ENCODE measurements at regions of chr4 and their contacts with region 1.

Region 1: DNA sequence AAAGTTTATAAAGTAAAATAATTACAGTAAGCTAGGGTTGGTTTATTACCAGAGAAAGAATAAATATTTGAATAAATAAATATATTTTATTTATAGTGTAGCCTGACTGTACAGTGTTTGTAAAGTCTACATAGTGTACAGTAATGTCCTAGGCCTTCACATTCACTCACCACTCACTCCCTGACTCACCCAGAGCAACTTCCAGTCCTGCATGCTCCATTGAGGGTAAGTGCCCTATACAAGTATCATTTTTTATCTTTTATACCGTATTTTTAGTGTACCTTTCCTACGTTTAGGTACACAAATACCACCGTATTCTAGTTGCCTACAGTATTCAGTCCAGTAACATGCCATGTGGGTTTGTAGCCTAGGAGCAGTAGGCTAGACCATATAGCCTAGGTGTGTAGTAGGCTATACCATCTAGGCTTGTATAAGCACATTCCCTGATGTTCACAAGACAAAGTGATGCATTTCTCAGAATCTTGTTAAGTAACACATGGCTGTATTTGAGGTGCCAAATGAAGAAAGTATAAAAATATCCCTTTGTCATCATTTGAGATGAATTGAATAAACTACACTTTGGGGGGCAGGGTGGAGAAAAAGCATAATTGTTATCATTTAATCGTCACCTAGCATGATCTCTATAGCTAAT is 14.7 kb upstream of the KLHL8 start:
- DNase-seq: no peak
- ATAC-seq: no peak
- H3K4me3 Mint-ChIP-seq: peak overlapping the region; percentile 80
- H3K27ac Mint-ChIP-seq: no peak overlapping the region
- H3K4me1 Mint-ChIP-seq: peaks cover 3% of the 10 kb centered on the region
- H3K27me3 Mint-ChIP-seq: peaks cover 1% of the 10 kb centered on the region
- CTCF ChIP-seq: no peak

Region 2: DNA sequence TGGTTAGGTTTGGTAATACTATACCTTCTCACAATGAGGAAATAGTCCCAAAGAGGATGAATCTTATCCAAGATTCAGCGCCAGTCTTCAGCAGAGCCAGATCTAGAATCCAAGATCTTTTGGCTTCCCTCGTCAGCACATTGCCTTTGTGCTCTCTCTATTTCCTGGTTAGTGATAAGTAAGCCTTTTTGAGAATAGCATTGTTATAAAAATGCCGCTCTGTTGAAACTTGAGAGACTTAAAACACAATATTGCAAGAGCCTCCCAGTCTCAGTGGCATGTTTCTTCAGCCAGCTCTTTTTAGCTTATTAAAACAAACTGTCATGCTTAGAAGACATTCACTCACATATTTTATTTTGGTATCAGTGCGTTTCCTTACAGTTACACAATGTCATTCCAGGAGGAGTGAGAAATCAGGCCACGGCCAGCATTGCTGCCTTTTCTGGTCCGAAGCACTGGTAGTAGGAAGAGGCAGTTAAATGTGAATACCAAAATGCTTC is 156.1 kb before region 1 on chr4:
- CTCF ChIA-PET with region 1: no interaction called
- POLR2A ChIA-PET with region 1: no interaction called
- intact Hi-C with region 1: no loop called
- DNase-seq: no peak
- ATAC-seq: no peak
- H3K4me3 Mint-ChIP-seq: no peak overlapping the region
- H3K27ac Mint-ChIP-seq: no peak overlapping the region
- H3K4me1 Mint-ChIP-seq: peaks cover 35% of the 10 kb centered on the region
- H3K27me3 Mint-ChIP-seq: no peaks in the 10 kb centered on the region
- CTCF ChIP-seq: no peak

Region 3: DNA sequence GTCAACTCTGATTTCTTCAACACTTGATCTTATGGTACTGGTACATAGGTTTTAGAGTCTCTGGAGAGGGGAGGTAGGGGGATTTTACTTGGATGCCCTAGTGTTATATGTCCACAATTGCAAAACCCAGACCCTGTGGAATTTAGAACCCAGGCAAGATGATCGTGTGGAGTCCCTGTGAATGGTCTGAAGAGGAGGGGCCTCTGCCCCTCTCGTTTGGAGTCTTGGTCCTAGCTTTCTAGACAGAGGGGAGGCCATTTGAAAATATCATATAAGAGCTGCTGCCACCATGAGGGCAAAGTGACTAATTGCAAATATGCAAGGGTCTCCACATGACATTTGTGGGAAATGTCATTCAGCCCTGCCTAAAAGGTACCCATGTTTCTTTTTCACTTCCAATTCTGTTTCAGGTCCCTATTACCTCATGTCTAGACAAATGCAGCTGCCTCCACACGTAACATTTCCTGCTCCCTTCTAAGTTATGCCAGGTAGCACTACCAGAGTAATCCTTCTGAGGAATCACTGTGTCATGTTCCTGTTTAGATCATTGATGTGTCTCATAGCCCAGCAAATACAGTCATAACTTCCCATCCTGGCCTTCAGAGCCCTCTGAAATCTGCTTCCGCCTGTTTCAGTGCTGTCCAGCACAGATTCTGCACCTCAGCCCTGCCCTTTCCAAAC is 141.6 kb before region 1 on chr4:
- CTCF ChIA-PET with region 1: no interaction called
- POLR2A ChIA-PET with region 1: no interaction called
- intact Hi-C with region 1: loop called (anchors 5 kb)
- DNase-seq: no peak
- ATAC-seq: peak; percentile 89
- H3K4me3 Mint-ChIP-seq: no peak overlapping the region
- H3K27ac Mint-ChIP-seq: peak overlapping the region; percentile 62
- H3K4me1 Mint-ChIP-seq: peaks cover 20% of the 10 kb centered on the region
- H3K27me3 Mint-ChIP-seq: no peaks in the 10 kb centered on the region
- CTCF ChIP-seq: peak; percentile 15

Measured in activated B cell treated with CpG ODN at 0.5 μM for 24 hours (primary cell).